ENCODE measurements at regions of chr10 and their contacts with region 1.

Region 1: GRCh38 chr10:60964257-60965235 is 20.6 kb upstream of the RHOBTB1 start:
- DNase-seq: peak; percentile 60 to 76 (median 63)
- ATAC-seq: peak; percentile 78 to 91 (median 82)
- H3K4me3 ChIP-seq: no peak overlapping the region
- H3K27ac ChIP-seq: peak overlapping the region in 10 of 12 donors; percentile 5 to 77 (median 38)
- H3K4me1 ChIP-seq: peaks cover 0 to 22% (median 8%) of the 10 kb centered on the region in 12 donors
- H3K27me3 ChIP-seq: no peaks in the 10 kb centered on the region
- CTCF ChIP-seq: peak; percentile 76 to 93 (median 84)
- POLR2A ChIP-seq: no peak

Region 2: DNA sequence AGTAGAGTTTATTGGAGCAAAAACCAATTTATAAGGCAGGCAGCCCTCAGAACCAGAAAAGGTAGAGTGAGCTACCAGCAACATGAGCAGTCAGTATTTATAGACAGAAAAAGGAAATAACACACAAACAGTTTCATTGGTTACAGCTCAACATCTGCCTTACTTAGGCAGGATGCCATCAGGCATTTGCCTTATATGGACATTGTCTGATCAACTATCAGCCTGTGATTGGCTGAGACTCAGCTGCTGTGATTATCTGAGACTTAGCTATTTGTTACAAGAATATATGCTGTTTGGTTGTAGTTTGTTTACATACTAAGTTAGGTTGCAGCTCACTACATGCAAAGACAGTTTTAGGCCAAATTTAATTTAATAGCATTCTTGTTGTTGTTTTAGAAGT is 246.7 kb before region 1 on chr10:
- intact Hi-C with region 1: no loop called
- DNase-seq: no peak
- ATAC-seq: no peak
- H3K4me3 ChIP-seq: no peak overlapping the region
- H3K27ac ChIP-seq: no peak overlapping the region
- H3K4me1 ChIP-seq: no peaks in the 10 kb centered on the region
- H3K27me3 ChIP-seq: peaks cover 0 to 4% (median 0%) of the 10 kb centered on the region in 9 donors
- CTCF ChIP-seq: no peak
- POLR2A ChIP-seq: no peak

Region 3: GRCh38 chr10:60883187-60883586 is 81.4 kb before region 1 on chr10:
- intact Hi-C with region 1: loop called in 8 of 10 experiments (anchors 2 to 5 kb)
- DNase-seq: peak in 3 of 5 donors; percentile 37 to 55 (median 44)
- ATAC-seq: peak; percentile 88 to 95 (median 92)
- H3K4me3 ChIP-seq: no peak overlapping the region
- H3K27ac ChIP-seq: peak overlapping the region in 8 of 12 donors; percentile 6 to 65 (median 48)
- H3K4me1 ChIP-seq: peaks cover 0 to 19% (median 8%) of the 10 kb centered on the region in 12 donors
- H3K27me3 ChIP-seq: no peaks in the 10 kb centered on the region
- CTCF ChIP-seq: peak; percentile 16 to 75 (median 54)
- POLR2A ChIP-seq: no peak

Region 4: DNA sequence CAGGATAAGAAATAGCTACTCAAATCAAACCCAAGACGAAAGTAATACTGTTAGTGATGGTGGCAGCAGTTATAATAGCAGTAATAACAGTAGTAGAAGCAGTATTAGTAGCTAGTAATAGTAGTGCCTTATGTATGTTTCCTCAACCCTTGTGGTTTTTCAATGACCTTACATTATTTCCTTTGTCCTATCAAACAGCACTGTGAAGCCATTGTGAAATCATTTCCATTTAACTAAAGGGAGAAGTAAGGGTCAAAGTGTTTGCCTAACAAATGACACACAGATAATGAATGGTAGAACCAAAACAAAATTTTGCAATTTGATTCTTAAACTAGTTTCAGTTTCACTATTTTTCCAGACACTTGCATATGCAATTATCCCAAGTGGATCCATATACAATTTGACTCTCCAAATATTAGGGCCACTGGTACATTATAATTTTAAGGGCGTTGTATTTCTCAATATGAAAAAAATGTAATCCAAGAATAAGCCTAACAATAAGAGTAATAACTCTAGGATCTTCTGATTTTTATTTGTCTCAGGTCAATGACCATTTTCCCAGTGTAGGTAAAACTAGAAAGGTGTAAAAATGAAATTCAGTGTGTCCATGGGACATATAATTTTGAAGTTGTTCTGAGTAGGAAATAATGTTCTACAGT is 522.3 kb after region 1 on chr10:
- intact Hi-C with region 1: no loop called
- DNase-seq: no peak
- ATAC-seq: no peak
- H3K4me3 ChIP-seq: no peak overlapping the region
- H3K27ac ChIP-seq: no peak overlapping the region
- H3K4me1 ChIP-seq: peaks cover 0 to 12% (median 0%) of the 10 kb centered on the region in 12 donors
- H3K27me3 ChIP-seq: peaks cover 0 to 5% (median 0%) of the 10 kb centered on the region in 9 donors
- CTCF ChIP-seq: no peak
- POLR2A ChIP-seq: no peak

Measured in heart left ventricle (tissue), 16 donors.